MCF 10A (cell line): ENCODE measurements at regions of chr5 and their contacts with region 1.

Region 1: DNA sequence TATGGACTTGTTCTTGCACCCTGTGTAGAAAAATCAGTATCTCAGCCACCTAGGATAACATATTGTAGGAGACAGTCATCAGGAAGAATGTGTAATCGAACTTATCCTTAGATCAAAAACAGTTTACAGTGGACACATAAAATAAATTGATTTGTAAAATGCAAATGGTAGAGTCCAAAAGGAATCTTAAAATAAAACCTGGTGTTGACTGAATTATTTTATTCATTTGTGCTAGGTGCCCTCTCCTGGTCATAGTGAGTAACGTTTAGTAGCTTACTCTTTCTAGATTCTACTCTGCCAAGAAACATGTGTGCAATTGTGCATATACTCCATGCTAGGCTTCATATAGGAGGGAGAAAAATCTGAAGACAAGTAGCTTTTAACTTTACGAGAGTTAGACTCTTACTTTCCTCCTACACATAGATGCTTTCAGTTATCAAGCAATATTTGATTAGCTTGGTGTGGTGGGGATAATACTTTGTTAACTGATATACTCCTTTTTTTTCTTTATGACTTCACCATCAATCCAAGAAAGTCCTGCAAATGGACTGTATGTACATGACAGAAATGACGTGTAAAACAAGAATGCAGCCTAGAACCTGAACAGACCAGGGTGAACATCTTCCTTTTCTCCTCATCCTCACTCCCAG is 23.7 kb upstream of the LOX start:
- DNase-seq: peak; percentile 76
- H3K4me3 Mint-ChIP-seq: no peak overlapping the region
- H3K27ac Mint-ChIP-seq: peak overlapping the region; percentile 35
- H3K4me1 Mint-ChIP-seq: peaks cover 19% of the 10 kb centered on the region
- H3K27me3 Mint-ChIP-seq: no peaks in the 10 kb centered on the region
- CTCF ChIP-seq: peak; percentile 67

Region 2: GRCh38 chr5:120405286-120405864 is 1696.4 kb before region 1 on chr5:
- CTCF ChIA-PET with region 1: interaction called, 10 read pairs
- POLR2A ChIA-PET with region 1: no interaction called
- intact Hi-C with region 1: no loop called
- DNase-seq: peak; percentile 86
- H3K4me3 Mint-ChIP-seq: no peak overlapping the region
- H3K27ac Mint-ChIP-seq: no peak overlapping the region
- H3K4me1 Mint-ChIP-seq: peaks cover 26% of the 10 kb centered on the region
- H3K27me3 Mint-ChIP-seq: no peaks in the 10 kb centered on the region
- CTCF ChIP-seq: no peak

Region 3: GRCh38 chr5:120817044-120817985 is 1284.4 kb before region 1 on chr5:
- CTCF ChIA-PET with region 1: interaction called, 5 read pairs
- POLR2A ChIA-PET with region 1: no interaction called
- intact Hi-C with region 1: loop called (anchors 2 kb)
- DNase-seq: peak; percentile 50
- H3K4me3 Mint-ChIP-seq: no peak overlapping the region
- H3K27ac Mint-ChIP-seq: no peak overlapping the region
- H3K4me1 Mint-ChIP-seq: no peaks in the 10 kb centered on the region
- H3K27me3 Mint-ChIP-seq: no peaks in the 10 kb centered on the region
- CTCF ChIP-seq: peak; percentile 72

Region 4: DNA sequence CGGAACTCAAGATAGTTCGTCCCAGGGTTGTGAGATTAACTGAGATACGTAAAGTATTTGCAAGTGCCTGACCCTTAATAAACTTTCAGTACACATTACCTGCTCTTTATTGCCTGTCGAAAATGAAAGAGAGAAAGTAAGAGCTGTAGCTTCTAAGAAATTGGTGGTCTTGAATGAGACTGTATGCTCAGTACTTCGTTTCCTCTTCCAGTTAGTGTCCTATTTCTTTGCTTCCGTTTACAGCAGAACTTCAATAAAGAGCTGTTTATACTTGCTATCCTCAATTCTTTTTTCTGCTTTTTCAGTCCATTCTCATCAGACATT is 139.5 kb before region 1 on chr5:
- CTCF ChIA-PET with region 1: interaction called, 48 read pairs
- POLR2A ChIA-PET with region 1: interaction called, 32 read pairs
- intact Hi-C with region 1: no loop called
- DNase-seq: no peak
- H3K4me3 Mint-ChIP-seq: peak overlapping the region; percentile 78
- H3K27ac Mint-ChIP-seq: peak overlapping the region; percentile 96
- H3K4me1 Mint-ChIP-seq: peaks cover 13% of the 10 kb centered on the region
- H3K27me3 Mint-ChIP-seq: no peaks in the 10 kb centered on the region
- CTCF ChIP-seq: no peak

Region 5: DNA sequence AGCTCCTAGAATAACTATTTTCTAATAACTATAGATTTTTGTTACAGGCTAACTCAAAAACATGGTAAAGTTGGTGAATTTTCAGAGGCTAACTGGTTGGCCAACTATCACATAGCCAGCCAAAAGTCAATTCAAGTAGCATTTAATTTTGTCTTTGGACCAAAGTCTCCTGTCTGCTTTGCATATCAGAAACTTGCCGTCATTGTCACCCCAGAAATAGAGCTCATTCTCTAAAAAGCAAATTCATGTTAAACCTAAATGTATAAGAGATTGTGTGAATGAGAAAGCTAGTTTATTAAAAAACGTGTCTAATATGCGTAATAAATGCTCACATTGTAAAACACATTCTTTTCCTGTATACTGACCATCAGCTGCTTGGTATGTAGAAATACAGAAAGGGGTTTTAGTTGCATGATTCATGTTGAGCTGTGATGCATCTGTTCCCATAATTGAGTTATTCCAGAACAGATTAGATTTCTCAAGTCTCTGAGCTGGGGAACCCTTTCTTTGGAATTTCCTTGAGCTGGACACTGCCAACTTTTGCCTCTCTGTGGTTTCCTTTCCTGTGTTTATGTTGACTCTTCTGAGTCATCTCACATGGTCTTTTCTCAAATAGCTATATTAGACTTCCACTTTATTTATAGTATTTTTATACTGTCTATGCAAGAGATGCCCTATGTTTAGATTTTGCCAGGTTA is 132.7 kb before region 1 on chr5:
- CTCF ChIA-PET with region 1: interaction called, 48 read pairs
- POLR2A ChIA-PET with region 1: interaction called, 32 read pairs
- intact Hi-C with region 1: loop called (anchors 1 kb)
- DNase-seq: peak; percentile 99
- H3K4me3 Mint-ChIP-seq: peak overlapping the region; percentile 38
- H3K27ac Mint-ChIP-seq: peak overlapping the region; percentile 80
- H3K4me1 Mint-ChIP-seq: peaks cover 15% of the 10 kb centered on the region
- H3K27me3 Mint-ChIP-seq: no peaks in the 10 kb centered on the region
- CTCF ChIP-seq: no peak

Region 6: DNA sequence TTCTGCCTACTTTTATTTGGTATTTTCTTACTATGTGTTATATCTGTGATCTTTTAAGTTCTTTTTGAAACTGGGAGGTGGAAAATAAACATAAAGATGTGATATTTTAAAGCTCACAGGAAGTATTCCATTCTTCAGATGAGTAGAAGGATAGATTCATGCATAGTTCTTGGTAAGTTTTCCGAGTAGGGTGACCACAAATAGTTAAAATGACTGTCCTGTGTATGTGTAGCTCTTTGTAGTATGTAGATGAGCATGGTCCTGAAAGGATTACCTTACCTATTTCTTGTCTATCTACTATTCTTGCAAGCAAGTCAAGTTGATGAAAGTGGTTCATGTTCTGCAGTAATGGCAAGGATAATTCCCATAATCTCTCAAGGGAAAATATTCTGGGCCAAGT is 92.3 kb before region 1 on chr5:
- CTCF ChIA-PET with region 1: interaction called, 11 read pairs
- POLR2A ChIA-PET with region 1: no interaction called
- intact Hi-C with region 1: no loop called
- DNase-seq: no peak
- H3K4me3 Mint-ChIP-seq: no peak overlapping the region
- H3K27ac Mint-ChIP-seq: no peak overlapping the region
- H3K4me1 Mint-ChIP-seq: peaks cover 3% of the 10 kb centered on the region
- H3K27me3 Mint-ChIP-seq: no peaks in the 10 kb centered on the region
- CTCF ChIP-seq: no peak

Region 7: DNA sequence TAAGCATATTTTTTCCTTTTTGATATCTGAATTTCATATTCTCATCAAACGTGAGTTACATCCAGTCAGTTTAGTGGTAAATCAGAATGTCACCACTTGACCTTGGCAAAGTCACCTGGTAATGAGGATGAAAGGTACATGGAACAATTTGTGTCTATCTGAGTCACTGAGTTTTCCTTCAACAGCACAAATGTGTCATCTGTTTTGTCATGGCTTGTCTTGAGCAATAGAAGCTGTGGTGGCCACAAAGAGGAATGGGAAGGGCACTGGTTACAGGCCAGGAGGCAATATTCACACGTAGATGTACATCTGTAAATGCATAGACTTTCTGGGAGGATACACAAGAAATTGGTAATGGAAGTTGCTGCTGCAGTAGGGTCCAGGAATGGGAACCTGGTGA is 19.2 kb after region 1 on chr5:
- CTCF ChIA-PET with region 1: interaction called, 28 read pairs
- POLR2A ChIA-PET with region 1: interaction called, 16 read pairs
- intact Hi-C with region 1: no loop called
- DNase-seq: peak; percentile 71
- H3K4me3 Mint-ChIP-seq: peak overlapping the region; percentile 45
- H3K27ac Mint-ChIP-seq: peak overlapping the region; percentile 90
- H3K4me1 Mint-ChIP-seq: peaks cover 30% of the 10 kb centered on the region
- H3K27me3 Mint-ChIP-seq: no peaks in the 10 kb centered on the region
- CTCF ChIP-seq: no peak